Testis (tissue), 5 donors: ENCODE measurements at regions of chr11 and their contacts with region 1.

Region 1: DNA sequence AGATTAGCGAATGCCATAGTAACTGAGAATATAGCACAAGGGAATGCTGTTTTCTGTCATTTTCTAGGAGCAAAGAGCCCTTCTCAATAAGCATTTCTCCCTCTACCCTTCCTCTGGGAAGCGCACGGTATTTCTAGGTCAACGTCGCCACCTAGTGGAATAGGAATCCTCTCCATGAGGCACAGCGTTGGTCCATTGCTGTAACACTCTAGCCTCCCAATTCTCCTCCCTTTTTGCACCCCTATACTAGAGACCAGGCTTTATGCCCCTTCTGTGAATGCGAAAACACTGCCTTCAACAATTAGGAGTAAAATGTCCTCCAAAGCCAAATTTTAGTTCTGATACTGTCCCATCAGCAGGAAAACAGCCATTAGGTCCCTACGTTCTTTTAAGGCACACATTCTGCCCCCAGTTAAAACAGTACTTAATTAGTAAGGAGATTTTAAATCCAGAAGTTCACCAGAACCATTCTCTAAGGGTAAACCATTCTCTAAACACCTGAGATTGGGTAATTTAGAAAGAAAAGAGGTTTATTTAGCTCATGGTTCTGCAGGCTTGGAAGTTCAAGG is 12.8 kb upstream of the HYLS1 start:
- DNase-seq: peak; percentile 78
- H3K4me3 ChIP-seq: no peak overlapping the region
- H3K27ac ChIP-seq: no peak overlapping the region
- H3K4me1 ChIP-seq: no peaks in the 10 kb centered on the region
- H3K27me3 ChIP-seq: no peaks in the 10 kb centered on the region
- CTCF ChIP-seq: peak; percentile 34 to 71 (median 66)
- POLR2A ChIP-seq: no peak

Region 2: DNA sequence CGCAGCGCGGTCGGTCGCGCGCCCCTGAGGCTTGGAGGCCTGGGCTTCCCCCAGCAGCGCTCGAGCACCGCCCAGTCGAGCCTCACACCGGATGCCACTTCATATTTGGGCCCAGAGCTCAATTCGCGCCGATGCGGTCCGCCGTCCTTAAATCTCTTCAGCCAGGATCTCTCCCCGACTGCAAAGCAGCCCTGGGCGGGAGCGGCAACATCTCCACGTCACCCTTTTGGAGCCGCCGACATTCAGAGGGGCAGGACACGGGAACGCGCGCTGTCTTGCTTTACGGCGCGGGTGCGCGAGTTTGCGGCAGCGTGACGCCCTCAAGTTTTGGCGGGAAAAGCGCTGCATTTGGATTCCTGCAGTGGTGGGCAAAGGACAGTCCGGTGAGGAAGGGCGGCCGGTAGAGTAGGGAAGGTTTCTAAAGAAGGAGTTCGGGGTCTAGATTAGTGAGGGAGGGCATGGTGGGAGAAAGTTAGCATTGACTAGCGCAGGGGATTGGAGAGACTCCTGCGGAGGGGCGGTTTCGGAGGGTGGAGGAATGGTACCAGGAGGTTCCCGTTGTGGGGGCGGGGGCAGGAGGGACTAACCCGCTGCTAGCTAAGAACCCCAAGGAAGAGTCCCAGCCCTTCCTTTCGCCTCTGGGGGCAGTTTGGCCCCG is 248.9 kb before region 1 on chr11:
- intact Hi-C with region 1: loop called (anchors 10 kb)
- DNase-seq: peak; percentile 94
- H3K4me3 ChIP-seq: peak overlapping the region; percentile 81 to 84
- H3K27ac ChIP-seq: peak overlapping the region; percentile 93 to 98
- H3K4me1 ChIP-seq: peaks cover 6% of the 10 kb centered on the region
- H3K27me3 ChIP-seq: no peaks in the 10 kb centered on the region
- CTCF ChIP-seq: peak in 1 of 3 experiments; percentile 14
- POLR2A ChIP-seq: peak; percentile 16